Activated naive CD4-positive, alpha-beta T cell treated with anti-CD3 and anti-CD28 coated beads for 36 hours (primary cell): ENCODE measurements at regions of chr1 and their contacts with region 1.

Region 1: GRCh38 chr1:28965271-28965870 is 51.0 kb downstream of the EPB41 start:
- DNase-seq: no peak
- H3K4me3 Mint-ChIP-seq: no peak overlapping the region
- H3K27ac Mint-ChIP-seq: peak overlapping the region; percentile 41
- H3K4me1 Mint-ChIP-seq: peaks cover 63% of the 10 kb centered on the region
- H3K27me3 Mint-ChIP-seq: no peaks in the 10 kb centered on the region

Region 2: DNA sequence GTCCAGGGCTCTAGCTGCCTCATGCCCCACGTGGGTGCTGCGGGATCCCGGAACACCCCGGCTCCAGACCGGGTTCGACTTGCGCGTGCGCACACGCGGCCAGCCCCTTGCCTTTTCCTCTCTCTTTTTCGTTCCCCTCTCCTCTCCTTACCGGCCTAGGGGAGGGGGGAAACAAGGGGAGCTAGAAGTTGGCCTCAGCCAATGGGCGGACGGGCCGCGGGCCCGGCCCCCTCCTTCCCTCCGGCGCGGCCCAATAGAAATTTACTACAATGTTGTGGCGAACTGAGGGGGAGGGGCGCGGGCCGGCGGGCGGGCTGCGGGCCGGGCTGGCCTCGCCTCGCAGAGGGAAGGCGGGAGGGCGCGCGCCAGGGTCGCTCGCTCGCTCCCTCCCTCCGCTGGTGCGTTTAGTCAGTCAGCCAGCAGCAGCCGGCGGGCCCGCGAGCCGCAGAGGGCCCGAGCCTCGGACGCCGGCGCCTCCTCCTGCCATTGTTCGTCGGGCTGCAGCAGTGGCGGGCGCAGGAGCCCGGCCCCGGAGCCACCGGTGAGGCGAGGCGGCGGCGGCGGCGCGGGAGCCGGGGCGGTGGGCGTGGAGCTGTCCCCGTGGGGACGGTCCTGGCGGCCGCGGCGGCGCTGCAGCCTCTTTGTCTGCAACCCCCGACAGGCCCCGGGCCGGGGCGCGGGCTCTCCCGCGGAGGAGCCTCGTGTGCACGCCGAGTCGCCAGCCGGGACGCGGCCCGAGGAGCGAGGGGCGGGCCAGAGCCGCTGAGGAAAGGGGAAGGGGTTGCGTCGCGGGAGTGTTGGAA is 50.9 kb before region 1 on chr1 and contains the start of gene EPB41:
- CTCF ChIA-PET with region 1: interaction called, 3 read pairs
- intact Hi-C with region 1: loop called (anchors 1 kb)
- DNase-seq: peak; percentile 93
- H3K4me3 Mint-ChIP-seq: peak within 1 kb of the TSS; percentile 90
- H3K27ac Mint-ChIP-seq: peak within 1 kb of the TSS; percentile 88
- H3K4me1 Mint-ChIP-seq: peaks cover 46% of the 10 kb centered on the region
- H3K27me3 Mint-ChIP-seq: no peaks in the 10 kb centered on the region
- total RNA-seq, gene EPB41: 97.4 to 100 TPM

Region 3: DNA sequence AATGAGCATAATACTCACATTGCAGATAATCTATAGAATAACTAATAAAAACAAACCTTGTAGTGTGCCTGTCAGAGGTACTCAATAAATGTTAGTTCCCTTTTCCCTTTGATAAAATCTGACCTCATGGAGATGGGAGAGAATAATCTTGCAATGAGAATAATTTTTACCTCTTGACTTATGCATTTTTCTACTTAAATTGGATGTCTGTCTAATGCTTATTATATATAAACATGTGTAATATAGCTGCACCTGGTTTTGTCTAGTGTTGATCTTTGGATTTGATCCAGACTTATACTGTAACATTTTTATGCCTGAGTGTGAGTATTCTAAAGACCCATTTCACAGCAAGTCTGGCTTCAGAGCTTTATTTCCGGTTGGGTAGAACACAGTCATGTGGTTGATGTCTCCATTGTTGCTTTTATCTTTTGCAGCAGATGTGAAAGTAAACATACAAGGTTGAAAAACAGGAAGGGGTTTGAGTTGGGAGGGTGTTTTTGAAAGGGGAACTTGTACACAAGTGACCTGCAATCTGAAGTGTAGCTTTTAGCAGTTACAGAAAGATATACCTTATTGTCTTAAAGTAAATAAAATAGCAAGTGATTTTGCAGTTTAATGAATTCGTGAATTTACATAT is 38.6 kb before region 1 on chr1:
- CTCF ChIA-PET with region 1: interaction called, 4 read pairs
- intact Hi-C with region 1: loop called (anchors 1 kb)
- DNase-seq: peak; percentile 40
- H3K4me3 Mint-ChIP-seq: peak overlapping the region; percentile 44
- H3K27ac Mint-ChIP-seq: peak overlapping the region; percentile 76
- H3K4me1 Mint-ChIP-seq: peaks cover 62% of the 10 kb centered on the region
- H3K27me3 Mint-ChIP-seq: no peaks in the 10 kb centered on the region

Region 4: GRCh38 chr1:28933277-28933676 is 32.1 kb before region 1 on chr1:
- CTCF ChIA-PET with region 1: no interaction called
- intact Hi-C with region 1: loop called (anchors 1 kb)
- DNase-seq: no peak
- H3K4me3 Mint-ChIP-seq: peak overlapping the region; percentile 52
- H3K27ac Mint-ChIP-seq: peak overlapping the region; percentile 74
- H3K4me1 Mint-ChIP-seq: peaks cover 73% of the 10 kb centered on the region
- H3K27me3 Mint-ChIP-seq: no peaks in the 10 kb centered on the region

Region 5: DNA sequence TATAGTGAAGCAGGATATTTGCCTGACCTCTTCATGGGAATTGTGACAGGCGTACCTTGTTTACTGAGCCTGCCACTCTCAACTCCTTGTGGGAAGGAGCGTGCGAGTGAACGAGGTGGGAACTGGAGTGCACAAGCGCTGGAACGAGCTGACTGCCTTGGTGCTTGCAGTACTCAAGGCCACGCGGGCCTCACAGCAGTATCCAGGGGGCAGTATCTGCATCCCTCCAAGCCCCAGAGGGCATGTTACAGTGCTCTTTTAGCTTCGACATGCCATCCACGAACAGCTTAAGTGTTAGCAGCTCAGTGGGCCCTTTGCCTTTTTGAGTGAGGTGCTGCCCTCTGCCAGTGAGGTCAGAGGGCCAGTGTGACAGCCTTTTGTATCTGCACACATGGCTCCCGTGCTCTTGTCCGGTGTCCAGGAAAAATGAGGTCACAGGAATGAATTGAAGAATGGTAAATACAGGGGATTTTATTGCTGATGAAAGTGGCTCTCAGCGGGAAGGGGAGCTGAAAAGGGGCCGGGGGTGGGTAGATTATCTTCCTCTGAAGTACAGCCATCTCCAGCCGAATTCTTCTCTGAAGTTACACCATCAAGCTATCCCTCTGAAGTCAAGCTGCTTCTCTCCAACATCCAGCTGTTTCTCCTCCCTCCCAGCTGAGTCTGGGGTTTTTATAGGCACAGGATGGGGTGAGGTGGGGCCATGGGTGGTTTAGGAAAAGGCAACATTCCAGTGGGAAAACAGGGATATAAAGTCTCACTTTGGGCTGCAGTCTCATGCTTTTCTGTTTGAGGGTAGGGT is 18.3 kb after region 1 on chr1:
- CTCF ChIA-PET with region 1: no interaction called
- intact Hi-C with region 1: no loop called
- DNase-seq: peak; percentile 8
- H3K4me3 Mint-ChIP-seq: no peak overlapping the region
- H3K27ac Mint-ChIP-seq: no peak overlapping the region
- H3K4me1 Mint-ChIP-seq: peaks cover 50% of the 10 kb centered on the region
- H3K27me3 Mint-ChIP-seq: no peaks in the 10 kb centered on the region

Region 6: DNA sequence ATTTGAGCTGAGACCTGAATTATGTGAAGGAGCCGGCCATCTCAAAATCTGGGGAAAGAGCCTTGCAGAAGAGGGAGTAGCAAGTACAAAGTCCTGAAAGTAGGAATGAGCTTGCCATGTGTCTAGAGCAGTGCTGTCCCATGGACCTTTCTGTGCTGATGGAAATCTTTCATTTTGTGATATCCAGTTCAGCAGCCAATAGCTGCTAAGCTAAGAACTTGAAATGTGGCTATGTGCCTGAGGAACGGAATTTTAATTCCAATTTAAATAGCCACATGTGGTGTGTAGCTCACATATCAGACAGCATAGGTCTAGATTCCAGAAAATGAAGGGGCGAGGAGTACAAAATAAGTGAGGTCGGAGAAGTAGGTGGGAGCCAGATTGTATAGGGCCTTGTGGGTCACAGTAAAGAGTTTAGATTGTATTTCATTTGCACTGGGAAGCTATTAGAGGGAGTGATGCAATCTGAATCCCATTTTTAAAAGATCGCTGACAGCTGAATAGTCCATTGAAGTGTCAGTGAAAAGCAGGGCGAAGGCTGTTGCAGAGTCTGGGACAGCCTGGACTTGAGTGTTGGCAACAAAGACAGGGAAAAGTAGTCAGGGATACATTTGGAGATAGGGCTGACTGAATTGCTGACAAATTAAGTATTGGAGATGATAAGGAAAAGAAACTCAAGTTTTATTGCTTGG is 78.0 kb after region 1 on chr1:
- CTCF ChIA-PET with region 1: interaction called, 5 read pairs
- intact Hi-C with region 1: loop called (anchors 2 kb)
- DNase-seq: no peak
- H3K4me3 Mint-ChIP-seq: no peak overlapping the region
- H3K27ac Mint-ChIP-seq: peak overlapping the region; percentile 85
- H3K4me1 Mint-ChIP-seq: peaks cover 38% of the 10 kb centered on the region
- H3K27me3 Mint-ChIP-seq: no peaks in the 10 kb centered on the region